Common myeloid progenitor, CD34-positive (primary cell): ENCODE measurements at regions of chr14 and their contacts with region 1.

Region 1: GRCh38 chr14:21103710-21104447 is 3.0 kb downstream of the TMEM253 start:
- DNase-seq: peak; percentile 94 to 97 (median 96)
- H3K4me3 ChIP-seq: peak overlapping the region; percentile 79 to 89 (median 85)
- H3K27ac ChIP-seq: peak overlapping the region; percentile 98 to 99
- H3K4me1 ChIP-seq: peaks cover 10 to 53% (median 39%) of the 10 kb centered on the region in 4 experiments
- H3K27me3 ChIP-seq: peaks cover 0 to 2% (median 0%) of the 10 kb centered on the region in 5 experiments

Region 2: GRCh38 chr14:21049271-21049673 is 54.6 kb before region 1 on chr14:
- CTCF ChIA-PET with region 1: interaction called, 11 read pairs
- POLR2A ChIA-PET with region 1: no interaction called
- DNase-seq: no peak
- H3K4me3 ChIP-seq: no peak overlapping the region
- H3K27ac ChIP-seq: no peak overlapping the region
- H3K4me1 ChIP-seq: peaks cover 5 to 13% (median 11%) of the 10 kb centered on the region in 4 experiments
- H3K27me3 ChIP-seq: no peaks in the 10 kb centered on the region

Region 3: DNA sequence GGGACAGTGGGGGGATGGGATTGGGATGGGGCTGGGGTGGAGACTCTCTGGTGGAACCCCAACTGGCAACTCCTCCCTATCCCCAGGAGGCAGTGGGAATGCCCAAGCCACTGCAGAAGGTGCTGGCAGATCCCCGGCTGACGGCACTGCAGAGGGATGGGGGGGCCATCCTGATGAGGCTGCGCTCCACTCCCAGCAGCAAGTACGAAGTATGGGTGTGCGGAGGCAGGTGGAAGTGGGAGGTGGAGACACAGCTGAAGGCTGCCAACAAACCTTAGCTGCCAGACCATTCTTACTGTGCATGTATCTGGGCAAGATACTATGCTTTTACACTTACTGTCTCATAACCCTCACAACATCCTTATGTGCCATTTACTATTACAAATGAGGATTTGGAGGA is 25.6 kb before region 1 on chr14:
- CTCF ChIA-PET with region 1: interaction called, 93 read pairs
- POLR2A ChIA-PET with region 1: no interaction called
- DNase-seq: no peak
- H3K4me3 ChIP-seq: no peak overlapping the region
- H3K27ac ChIP-seq: no peak overlapping the region
- H3K4me1 ChIP-seq: peaks cover 0 to under 1% (median 0%) of the 10 kb centered on the region in 4 experiments
- H3K27me3 ChIP-seq: no peaks in the 10 kb centered on the region

Region 4: DNA sequence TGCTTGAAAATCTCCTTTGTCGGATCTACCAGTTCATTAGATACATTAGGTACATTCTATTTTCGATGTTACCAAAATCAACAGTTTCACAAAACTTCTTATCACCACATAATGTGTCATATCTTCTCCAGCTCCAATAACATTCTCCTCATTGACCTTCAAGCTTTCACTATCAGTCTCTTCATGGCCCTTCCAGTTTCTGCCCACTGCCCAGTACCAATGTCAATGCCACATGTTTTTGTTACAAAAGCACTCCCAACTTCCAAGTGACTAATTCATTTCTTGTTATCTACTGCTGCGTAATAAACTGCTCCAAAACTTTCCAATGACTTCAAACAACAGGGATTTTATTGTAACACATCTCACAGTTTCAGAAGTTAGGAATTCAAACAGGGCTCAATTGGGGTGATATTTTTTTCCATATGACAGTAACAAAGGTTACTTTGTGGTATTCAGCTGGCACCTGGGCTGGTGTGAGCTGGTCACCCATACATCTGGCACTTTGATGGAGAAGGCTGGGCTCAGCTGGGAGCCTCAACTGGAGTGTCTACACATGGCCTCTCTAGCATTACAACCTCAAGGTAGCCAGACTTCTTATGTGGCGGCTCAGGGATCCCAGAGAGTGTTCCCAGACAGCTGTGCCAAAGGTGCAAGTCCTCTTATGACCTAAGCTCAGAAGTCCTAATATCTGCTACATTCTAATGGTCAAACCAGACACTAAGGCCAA is 45.9 kb after region 1 on chr14:
- CTCF ChIA-PET with region 1: no interaction called
- POLR2A ChIA-PET with region 1: no interaction called
- DNase-seq: no peak
- H3K4me3 ChIP-seq: no peak overlapping the region
- H3K27ac ChIP-seq: no peak overlapping the region
- H3K4me1 ChIP-seq: no peaks in the 10 kb centered on the region
- H3K27me3 ChIP-seq: no peaks in the 10 kb centered on the region

Region 5: GRCh38 chr14:21163871-21164291 is 60.0 kb after region 1 on chr14:
- CTCF ChIA-PET with region 1: no interaction called
- POLR2A ChIA-PET with region 1: no interaction called
- DNase-seq: no peak
- H3K4me3 ChIP-seq: no peak overlapping the region
- H3K27ac ChIP-seq: no peak overlapping the region
- H3K4me1 ChIP-seq: no peaks in the 10 kb centered on the region
- H3K27me3 ChIP-seq: peaks cover 0 to 2% (median 0%) of the 10 kb centered on the region in 5 experiments

Region 6: DNA sequence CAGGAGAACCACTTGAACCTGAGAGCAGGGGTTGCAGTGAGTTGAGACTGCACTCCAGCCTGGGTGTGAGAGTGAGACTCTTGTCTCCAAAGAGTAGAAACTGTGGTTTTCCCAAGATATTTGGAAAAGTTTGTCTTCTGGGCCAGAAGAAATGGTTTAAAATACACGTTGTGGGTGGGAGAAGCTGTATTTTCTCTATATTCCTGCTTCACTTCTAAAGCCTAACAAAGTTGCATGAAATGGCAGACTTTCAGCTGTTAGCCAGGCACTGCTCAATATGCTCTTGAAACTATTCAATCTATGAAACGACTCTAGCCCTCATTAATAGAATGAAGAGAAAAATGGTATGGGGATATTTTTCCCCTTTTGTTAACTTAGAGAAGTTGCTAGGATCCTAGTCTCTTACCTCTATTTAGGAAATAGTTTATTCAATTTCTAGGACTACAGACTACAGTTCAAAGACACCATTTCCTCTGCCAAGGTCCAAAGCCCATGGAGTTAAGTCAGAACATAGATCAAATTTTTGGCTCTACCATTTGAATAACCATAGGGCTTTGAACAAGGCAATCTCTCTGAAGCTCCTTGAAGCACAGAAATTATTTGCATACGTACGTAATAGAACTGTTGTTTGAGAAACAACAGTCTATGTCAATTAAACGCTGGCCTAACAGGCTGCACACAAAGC is 101.3 kb after region 1 on chr14:
- CTCF ChIA-PET with region 1: no interaction called
- POLR2A ChIA-PET with region 1: no interaction called
- DNase-seq: no peak
- H3K4me3 ChIP-seq: no peak overlapping the region
- H3K27ac ChIP-seq: no peak overlapping the region
- H3K4me1 ChIP-seq: no peaks in the 10 kb centered on the region
- H3K27me3 ChIP-seq: no peaks in the 10 kb centered on the region